Activated CD8-positive, alpha-beta T cell treated with anti-CD3 and anti-CD28 coated beads, Interleukin-2, amount 10 ng/mL, durations not matched to agents 7 days and 5 days (primary cell): ENCODE measurements at regions of chr2 and their contacts with region 1.

Region 1: DNA sequence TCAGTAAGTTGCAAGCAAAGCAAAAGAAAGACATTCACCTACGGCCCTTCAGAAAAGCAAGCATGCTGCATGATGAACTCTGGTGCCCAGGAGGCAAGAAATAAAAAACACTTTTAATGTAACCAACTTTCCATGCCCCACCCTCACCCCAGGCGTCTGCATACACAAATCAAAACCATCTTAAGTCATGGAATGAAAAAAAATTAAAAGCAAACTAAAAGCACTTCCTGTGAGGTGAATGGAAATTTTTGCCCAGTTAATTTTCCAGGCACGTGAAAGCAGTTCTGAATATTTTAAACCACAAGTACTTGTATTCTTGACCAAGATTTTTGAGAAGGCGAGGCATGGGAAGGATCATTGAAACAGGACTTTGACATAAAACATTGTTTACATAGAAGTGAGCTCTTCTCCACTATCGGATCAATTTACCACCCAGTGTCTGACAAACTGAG is 2.5 kb upstream of the ICOS start:
- DNase-seq: peak; percentile 51
- ATAC-seq: peak; percentile 59
- H3K4me3 Mint-ChIP-seq: peak overlapping the region; percentile 55
- H3K27ac Mint-ChIP-seq: peak overlapping the region; percentile 89
- H3K4me1 Mint-ChIP-seq: peaks cover 38% of the 10 kb centered on the region
- H3K27me3 Mint-ChIP-seq: no peaks in the 10 kb centered on the region

Region 2: GRCh38 chr2:203897544-203897943 is 36.5 kb before region 1 on chr2:
- CTCF ChIA-PET with region 1: no interaction called
- POLR2A ChIA-PET with region 1: no interaction called
- DNase-seq: no peak
- ATAC-seq: no peak
- H3K4me3 Mint-ChIP-seq: no peak overlapping the region
- H3K27ac Mint-ChIP-seq: no peak overlapping the region
- H3K4me1 Mint-ChIP-seq: peaks cover 20% of the 10 kb centered on the region
- H3K27me3 Mint-ChIP-seq: no peaks in the 10 kb centered on the region

Region 3: DNA sequence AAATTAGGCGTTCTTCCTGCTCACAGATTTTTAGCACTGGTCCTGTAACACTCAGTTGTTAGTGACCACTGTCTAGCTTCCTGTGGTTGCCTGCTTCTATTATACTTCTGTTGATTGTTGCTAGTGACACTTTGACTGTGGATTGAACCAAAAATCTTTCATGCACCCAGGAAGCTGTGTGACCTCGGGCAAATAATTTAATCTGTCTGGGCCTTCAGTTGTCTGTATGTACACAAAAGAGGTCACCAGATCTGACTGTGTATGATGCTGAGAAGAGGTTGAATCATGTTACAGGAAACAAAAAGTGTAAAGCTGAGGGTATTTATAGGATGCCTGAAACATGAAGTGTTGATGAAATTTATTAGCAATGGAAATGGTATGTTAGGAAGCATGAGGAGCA is 15.2 kb after region 1 on chr2:
- CTCF ChIA-PET with region 1: interaction called, 8 read pairs
- POLR2A ChIA-PET with region 1: interaction called, 16 read pairs
- DNase-seq: peak; percentile 49
- ATAC-seq: peak; percentile 46
- H3K4me3 Mint-ChIP-seq: peak overlapping the region; percentile 5
- H3K27ac Mint-ChIP-seq: peak overlapping the region; percentile 80
- H3K4me1 Mint-ChIP-seq: peaks cover 83% of the 10 kb centered on the region
- H3K27me3 Mint-ChIP-seq: no peaks in the 10 kb centered on the region

Region 4: DNA sequence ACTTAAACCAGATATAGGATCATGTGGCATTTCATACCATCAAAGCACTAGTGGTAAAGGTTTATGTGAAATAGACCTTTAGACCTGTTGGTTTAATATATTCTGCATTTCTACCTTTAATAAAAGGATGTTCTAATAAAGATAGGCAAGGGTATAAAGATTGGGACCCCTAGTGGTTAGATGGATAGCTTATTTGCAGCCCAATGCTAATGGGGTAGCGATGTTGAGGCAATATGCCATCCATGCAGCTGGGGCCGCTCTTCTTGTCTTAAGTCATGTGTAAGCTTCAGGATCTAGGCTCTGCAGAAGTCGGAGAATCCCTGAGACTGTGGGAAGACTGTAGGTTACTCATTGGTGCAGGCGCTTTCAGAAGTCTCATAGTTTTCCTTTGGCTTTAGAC is 117.4 kb after region 1 on chr2:
- CTCF ChIA-PET with region 1: interaction called, 12 read pairs
- POLR2A ChIA-PET with region 1: no interaction called
- DNase-seq: no peak
- ATAC-seq: no peak
- H3K4me3 Mint-ChIP-seq: no peak overlapping the region
- H3K27ac Mint-ChIP-seq: no peak overlapping the region
- H3K4me1 Mint-ChIP-seq: peaks cover 15% of the 10 kb centered on the region
- H3K27me3 Mint-ChIP-seq: peaks cover 2% of the 10 kb centered on the region